CD4-positive, alpha-beta memory T cell (primary cell): ENCODE measurements at regions of chr15 and their contacts with region 1.

Region 1: GRCh38 chr15:85582131-85583079 is 202.0 kb downstream of the AKAP13 start:
- DNase-seq: peak; percentile 68 to 84 (median 76)
- H3K4me3 ChIP-seq: peak overlapping the region; percentile 74 to 92
- H3K4me3 Mint-ChIP-seq: peak overlapping the region; percentile 87 to 95 (median 89)
- H3K27ac ChIP-seq: peak overlapping the region; percentile 72
- H3K27ac Mint-ChIP-seq: peak overlapping the region; percentile 92 to 99 (median 98)
- H3K4me1 ChIP-seq: peaks cover 79% of the 10 kb centered on the region
- H3K4me1 Mint-ChIP-seq: peaks cover 63 to 82% (median 72%) of the 10 kb centered on the region in 4 donors
- H3K27me3 ChIP-seq: no peaks in the 10 kb centered on the region
- H3K27me3 Mint-ChIP-seq: no peaks in the 10 kb centered on the region

Region 2: DNA sequence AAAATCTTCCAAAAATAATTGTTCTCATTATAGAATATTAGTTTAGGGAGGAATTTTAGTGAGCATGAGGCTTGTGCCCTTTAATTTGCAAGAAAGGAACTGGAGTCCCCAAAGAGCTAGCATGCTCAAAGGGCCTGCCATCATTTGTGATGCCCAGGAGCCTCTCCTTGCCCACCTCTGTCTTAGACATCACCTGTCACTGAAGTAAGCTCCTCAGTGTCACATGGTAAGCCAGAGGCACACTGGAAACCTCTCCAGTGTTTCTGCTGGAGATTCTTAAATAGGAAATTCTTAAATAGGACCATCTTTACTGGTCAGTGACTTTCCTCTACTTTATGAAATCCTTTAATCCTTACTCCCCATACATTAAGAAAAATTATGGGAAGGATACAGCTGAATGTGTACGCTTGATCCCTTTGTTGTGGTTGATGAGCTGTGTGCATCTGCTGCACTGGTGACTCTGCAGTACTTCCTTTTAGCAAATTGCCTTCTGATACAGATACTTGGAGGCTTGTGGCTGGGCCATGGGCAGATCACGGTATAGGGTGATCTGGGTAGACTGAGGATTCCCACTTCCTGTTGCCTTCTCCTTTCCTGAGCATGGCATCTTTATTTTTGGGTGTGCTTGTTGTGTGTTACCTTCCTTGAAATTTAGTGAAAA is 14.9 kb after region 1 on chr15:
- CTCF ChIA-PET with region 1: interaction called, 9 read pairs
- POLR2A ChIA-PET with region 1: interaction called, 12 read pairs
- intact Hi-C with region 1: loop called (anchors 1 kb)
- DNase-seq: peak; percentile 32 to 67 (median 53)
- H3K4me3 ChIP-seq: no peak overlapping the region
- H3K4me3 Mint-ChIP-seq: peak overlapping the region in 7 of 8 donors; percentile 7 to 75 (median 33)
- H3K27ac ChIP-seq: no peak overlapping the region
- H3K27ac Mint-ChIP-seq: peak overlapping the region; percentile 36 to 92 (median 84)
- H3K4me1 ChIP-seq: peaks cover 54% of the 10 kb centered on the region
- H3K4me1 Mint-ChIP-seq: peaks cover 46 to 70% (median 52%) of the 10 kb centered on the region in 4 donors
- H3K27me3 ChIP-seq: no peaks in the 10 kb centered on the region
- H3K27me3 Mint-ChIP-seq: no peaks in the 10 kb centered on the region

Region 3: GRCh38 chr15:85646538-85647091 is 64.2 kb after region 1 on chr15:
- CTCF ChIA-PET with region 1: interaction called, 4 read pairs
- POLR2A ChIA-PET with region 1: interaction called, 11 read pairs
- intact Hi-C with region 1: no loop called
- DNase-seq: peak; percentile 22 to 72 (median 55)
- H3K4me3 ChIP-seq: no peak overlapping the region
- H3K4me3 Mint-ChIP-seq: peak overlapping the region in 6 of 8 donors; percentile 22 to 53 (median 34)
- H3K27ac ChIP-seq: peak overlapping the region; percentile 15
- H3K27ac Mint-ChIP-seq: peak overlapping the region; percentile 62 to 93 (median 84)
- H3K4me1 ChIP-seq: peaks cover 37% of the 10 kb centered on the region
- H3K4me1 Mint-ChIP-seq: peaks cover 39 to 56% (median 45%) of the 10 kb centered on the region in 4 donors
- H3K27me3 ChIP-seq: no peaks in the 10 kb centered on the region
- H3K27me3 Mint-ChIP-seq: no peaks in the 10 kb centered on the region

Region 4: DNA sequence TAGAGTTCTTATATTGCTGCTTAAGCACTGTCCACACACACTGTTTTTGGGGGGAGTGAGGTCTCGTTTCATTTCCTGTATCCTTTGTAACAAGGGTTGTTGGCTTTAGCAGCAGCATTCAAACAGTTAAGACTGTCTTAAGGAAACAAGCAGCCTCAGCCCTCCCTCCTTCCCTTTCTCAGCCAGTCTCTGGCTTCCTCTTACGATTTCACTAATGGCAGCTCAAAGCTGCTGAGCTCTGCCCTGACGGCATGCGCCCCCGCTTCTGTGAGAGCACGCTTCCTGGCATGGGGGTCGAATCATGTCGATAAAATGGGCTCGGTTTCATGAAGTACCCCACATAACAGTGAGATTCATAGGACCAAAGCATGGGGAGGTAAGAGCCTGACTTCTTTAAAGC is 107.3 kb after region 1 on chr15:
- CTCF ChIA-PET with region 1: interaction called, 8 read pairs
- POLR2A ChIA-PET with region 1: interaction called, 71 read pairs
- intact Hi-C with region 1: no loop called
- DNase-seq: peak; percentile 65 to 77 (median 71)
- H3K4me3 ChIP-seq: peak overlapping the region; percentile 71 to 80
- H3K4me3 Mint-ChIP-seq: peak overlapping the region; percentile 96 to 100 (median 98)
- H3K27ac ChIP-seq: peak overlapping the region; percentile 83
- H3K27ac Mint-ChIP-seq: peak overlapping the region; percentile 96 to 100 (median 98)
- H3K4me1 ChIP-seq: peaks cover 73% of the 10 kb centered on the region
- H3K4me1 Mint-ChIP-seq: peaks cover 59 to 75% (median 64%) of the 10 kb centered on the region in 4 donors
- H3K27me3 ChIP-seq: no peaks in the 10 kb centered on the region
- H3K27me3 Mint-ChIP-seq: no peaks in the 10 kb centered on the region

Region 5: GRCh38 chr15:85707519-85708338 is 125.3 kb after region 1 on chr15:
- CTCF ChIA-PET with region 1: interaction called, 3 read pairs
- POLR2A ChIA-PET with region 1: interaction called, 24 read pairs
- intact Hi-C with region 1: loop called (anchors 5 kb)
- DNase-seq: peak in 2 of 5 donors; percentile 55 to 73
- H3K4me3 ChIP-seq: peak overlapping the region; percentile 42 to 61
- H3K4me3 Mint-ChIP-seq: peak overlapping the region; percentile 83 to 95 (median 87)
- H3K27ac ChIP-seq: peak overlapping the region; percentile 86
- H3K27ac Mint-ChIP-seq: peak overlapping the region; percentile 96 to 100 (median 97)
- H3K4me1 ChIP-seq: peaks cover 72% of the 10 kb centered on the region
- H3K4me1 Mint-ChIP-seq: peaks cover 69 to 89% (median 80%) of the 10 kb centered on the region in 4 donors
- H3K27me3 ChIP-seq: no peaks in the 10 kb centered on the region
- H3K27me3 Mint-ChIP-seq: no peaks in the 10 kb centered on the region